ENCODE measurements at regions of chr5 and their contacts with region 1.

Region 1: GRCh38 chr5:76715736-76716455 is at the start of gene F2R:
- DNase-seq: peak; percentile 81
- total RNA-seq, gene F2R: 33.5 TPM

Region 2: GRCh38 chr5:76601470-76601869 is 114.4 kb before region 1 on chr5:
- intact Hi-C with region 1: loop called (anchors 5 kb)
- DNase-seq: no peak

Region 3: DNA sequence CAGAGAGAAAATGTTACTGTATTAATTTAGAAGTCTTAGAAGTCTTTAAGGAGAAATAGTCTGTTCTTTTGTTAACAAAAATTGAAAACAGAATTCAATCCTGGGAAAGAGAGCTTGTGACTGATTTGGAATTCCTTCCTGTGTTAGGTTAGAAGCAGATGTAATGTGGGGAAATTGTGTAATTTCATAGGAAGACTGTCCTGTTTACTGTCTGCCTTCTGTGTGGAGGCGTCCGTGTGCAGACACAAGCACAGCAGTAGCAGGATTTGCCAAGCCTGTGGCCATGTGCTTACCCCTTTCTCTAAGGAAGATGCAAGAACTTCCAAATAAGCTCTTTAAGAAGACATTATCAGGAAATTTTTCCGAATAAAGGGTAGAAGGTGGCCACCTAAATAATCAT is 36.7 kb before region 1 on chr5:
- intact Hi-C with region 1: loop called (anchors 5 kb)
- DNase-seq: no peak

Region 4: DNA sequence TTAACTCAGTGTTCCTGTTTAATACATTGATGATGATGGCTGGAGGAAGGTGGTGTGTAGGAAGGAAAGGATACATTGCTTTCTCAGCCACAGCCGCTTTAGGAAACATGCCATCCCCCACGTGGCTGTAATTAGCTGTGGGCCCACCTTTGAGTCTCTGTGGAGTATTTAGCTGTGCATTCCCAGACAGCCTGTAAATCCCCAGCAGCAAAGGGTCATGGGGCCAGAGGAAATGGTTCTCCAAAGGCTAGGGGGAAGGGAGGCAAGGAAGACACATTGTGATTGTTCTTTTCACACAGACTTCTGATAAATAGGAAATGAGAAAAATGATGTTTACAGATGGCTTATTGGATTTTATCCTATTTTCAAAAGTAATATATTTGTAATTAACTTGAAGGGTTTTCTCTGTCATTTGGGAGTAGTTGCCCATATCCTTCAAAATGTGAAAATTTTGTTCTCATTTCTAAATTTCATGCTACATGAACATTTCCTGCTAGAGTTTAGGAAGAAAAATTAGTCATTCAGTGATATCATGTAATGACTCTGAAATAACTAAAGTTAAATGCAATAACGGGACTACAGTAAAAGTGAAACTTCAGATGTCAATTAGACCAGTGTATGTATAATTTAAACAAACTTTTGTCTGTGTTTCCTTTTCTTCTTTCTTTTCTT is 24.3 kb before region 1 on chr5:
- intact Hi-C with region 1: loop called (anchors 1 kb)
- DNase-seq: no peak

Region 5: GRCh38 chr5:76771705-76772405 is 56.0 kb after region 1 on chr5:
- intact Hi-C with region 1: loop called (anchors 5 kb)
- DNase-seq: no peak

Measured in cardiac septum (tissue), 1 donor.